Naive thymus-derived CD4-positive, alpha-beta T cell (primary cell): ENCODE measurements at regions of chr7 and their contacts with region 1.

Region 1: GRCh38 chr7:28020302-28020940 is 160.2 kb downstream of the JAZF1 start:
- DNase-seq: peak in 7 of 9 donors; percentile 27 to 63 (median 53)
- ATAC-seq: peak; percentile 90
- H3K4me3 ChIP-seq: no peak overlapping the region
- H3K4me3 Mint-ChIP-seq: peak overlapping the region in 1 of 10 donors; percentile 11
- H3K27ac ChIP-seq: no peak overlapping the region
- H3K27ac Mint-ChIP-seq: no peak overlapping the region
- H3K4me1 ChIP-seq: no peaks in the 10 kb centered on the region
- H3K4me1 Mint-ChIP-seq: peaks cover 0 to 17% (median 2%) of the 10 kb centered on the region in 7 donors
- H3K27me3 ChIP-seq: no peaks in the 10 kb centered on the region
- H3K27me3 Mint-ChIP-seq: peaks cover 0 to 3% (median 0%) of the 10 kb centered on the region in 5 donors

Region 2: GRCh38 chr7:27576360-27576944 is 444.0 kb before region 1 on chr7:
- CTCF ChIA-PET with region 1: no interaction called
- POLR2A ChIA-PET with region 1: no interaction called
- intact Hi-C with region 1: loop called in 1 of 2 experiments (anchors 2 kb)
- DNase-seq: peak in 5 of 9 donors; percentile 15 to 38 (median 29)
- ATAC-seq: peak; percentile 67
- H3K4me3 ChIP-seq: no peak overlapping the region
- H3K4me3 Mint-ChIP-seq: no peak overlapping the region
- H3K27ac ChIP-seq: no peak overlapping the region
- H3K27ac Mint-ChIP-seq: no peak overlapping the region
- H3K4me1 ChIP-seq: no peaks in the 10 kb centered on the region
- H3K4me1 Mint-ChIP-seq: peaks cover 0 to 6% (median 0%) of the 10 kb centered on the region in 7 donors
- H3K27me3 ChIP-seq: no peaks in the 10 kb centered on the region
- H3K27me3 Mint-ChIP-seq: peaks cover 0 to 3% (median 0%) of the 10 kb centered on the region in 5 donors

Region 3: DNA sequence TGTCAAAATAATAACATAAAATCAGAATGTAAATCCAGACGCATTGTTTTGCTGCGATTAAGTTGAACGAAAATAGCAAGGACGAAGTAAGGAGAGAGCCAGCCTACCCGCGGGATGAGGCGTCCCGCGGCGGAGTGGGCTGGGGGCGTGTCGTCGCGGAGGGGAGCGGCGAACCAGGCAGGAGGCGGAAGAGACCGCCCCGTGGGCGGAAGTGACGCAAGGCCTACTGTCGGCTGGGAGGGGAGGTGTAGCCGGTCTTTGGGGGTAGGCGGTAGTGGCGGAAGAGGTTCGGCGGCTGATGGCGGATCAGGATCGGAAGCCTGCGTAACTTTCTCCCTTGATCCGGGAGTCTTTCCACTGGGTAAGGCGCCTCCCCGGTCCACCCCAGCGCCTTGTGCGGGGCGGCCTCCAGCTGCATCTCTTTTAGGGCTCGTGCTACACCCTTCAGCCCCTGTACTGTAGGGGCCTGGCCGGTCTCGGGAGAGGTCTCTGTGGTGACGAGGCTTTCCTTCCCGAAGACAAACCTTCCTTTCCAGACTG is 280.4 kb before region 1 on chr7 and contains the start of gene TAX1BP1:
- CTCF ChIA-PET with region 1: no interaction called
- POLR2A ChIA-PET with region 1: no interaction called
- intact Hi-C with region 1: loop called (anchors 1 kb)
- DNase-seq: peak; percentile 92 to 97 (median 95)
- ATAC-seq: peak; percentile 97
- H3K4me3 ChIP-seq: peak within 1 kb of the TSS; percentile 91
- H3K4me3 Mint-ChIP-seq: peak within 1 kb of the TSS; percentile 81 to 99 (median 97)
- H3K27ac ChIP-seq: peak within 1 kb of the TSS; percentile 87
- H3K27ac Mint-ChIP-seq: peak within 1 kb of the TSS; percentile 76 to 99 (median 93)
- H3K4me1 ChIP-seq: peaks cover 6 to 24% of the 10 kb centered on the region in 2 donors
- H3K4me1 Mint-ChIP-seq: peaks cover 27 to 51% (median 44%) of the 10 kb centered on the region in 7 donors
- H3K27me3 ChIP-seq: no peaks in the 10 kb centered on the region
- H3K27me3 Mint-ChIP-seq: peaks cover 0 to 9% (median 0%) of the 10 kb centered on the region in 5 donors
- total RNA-seq, gene TAX1BP1: 69.4 to 111 (median 108) TPM

Region 4: GRCh38 chr7:27784393-27785053 is 235.9 kb before region 1 on chr7:
- CTCF ChIA-PET with region 1: interaction called, 3 read pairs
- POLR2A ChIA-PET with region 1: no interaction called
- intact Hi-C with region 1: loop called (anchors 1 to 5 kb)
- DNase-seq: peak in 7 of 9 donors; percentile 30 to 54 (median 43)
- ATAC-seq: peak; percentile 73
- H3K4me3 ChIP-seq: no peak overlapping the region
- H3K4me3 Mint-ChIP-seq: no peak overlapping the region
- H3K27ac ChIP-seq: no peak overlapping the region
- H3K27ac Mint-ChIP-seq: peak overlapping the region in 1 of 9 donors; percentile 15
- H3K4me1 ChIP-seq: no peaks in the 10 kb centered on the region
- H3K4me1 Mint-ChIP-seq: peaks cover 4 to 35% (median 20%) of the 10 kb centered on the region in 7 donors
- H3K27me3 ChIP-seq: no peaks in the 10 kb centered on the region
- H3K27me3 Mint-ChIP-seq: no peaks in the 10 kb centered on the region

Region 5: DNA sequence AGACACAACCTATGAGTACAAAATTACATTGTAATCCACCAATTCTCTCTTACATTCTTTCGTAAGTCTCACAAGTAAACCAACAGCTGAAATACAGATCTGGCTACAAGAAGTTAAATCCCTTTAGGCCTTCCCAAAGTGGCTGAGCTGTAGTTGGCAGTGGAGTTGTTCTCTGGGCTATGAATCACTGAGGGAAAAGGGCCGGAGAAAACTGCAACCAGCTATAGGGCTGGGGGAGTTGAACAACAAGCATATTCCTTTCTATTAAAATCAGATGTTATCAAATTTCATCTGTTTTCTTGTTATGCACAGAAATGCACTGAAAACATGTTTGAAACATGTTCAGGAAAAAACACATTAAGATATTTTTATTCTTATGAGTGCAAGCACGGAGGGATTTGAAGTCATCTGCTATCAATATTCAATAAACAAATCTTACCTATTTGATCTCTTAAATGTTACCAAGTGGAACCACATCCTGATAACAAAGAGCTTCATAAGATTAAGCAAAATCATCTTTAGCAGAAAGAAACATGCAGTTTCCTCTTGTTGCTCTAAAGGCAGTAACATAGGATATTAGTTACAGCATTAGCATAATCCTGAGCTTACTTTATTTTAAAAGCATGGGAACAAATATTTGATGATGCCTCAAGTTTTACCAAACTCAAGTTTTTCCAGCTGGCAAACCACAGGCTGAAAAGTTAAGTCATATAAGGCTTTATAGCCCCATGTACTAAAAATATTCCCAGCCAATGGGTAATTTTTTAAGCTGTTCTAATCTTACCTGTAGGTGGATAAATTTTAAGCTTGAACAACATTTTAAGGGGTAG is 67.8 kb before region 1 on chr7:
- CTCF ChIA-PET with region 1: interaction called, 10 read pairs
- POLR2A ChIA-PET with region 1: no interaction called
- intact Hi-C with region 1: loop called (anchors 5 to 10 kb)
- DNase-seq: peak in 6 of 9 donors; percentile 10 to 65 (median 44)
- ATAC-seq: peak; percentile 74
- H3K4me3 ChIP-seq: no peak overlapping the region
- H3K4me3 Mint-ChIP-seq: peak overlapping the region in 9 of 10 donors; percentile 55 to 85 (median 70)
- H3K27ac ChIP-seq: peak overlapping the region; percentile 39
- H3K27ac Mint-ChIP-seq: peak overlapping the region in 8 of 9 donors; percentile 34 to 95 (median 88)
- H3K4me1 ChIP-seq: peaks cover 0 to 32% of the 10 kb centered on the region in 2 donors
- H3K4me1 Mint-ChIP-seq: peaks cover 10 to 64% (median 49%) of the 10 kb centered on the region in 7 donors
- H3K27me3 ChIP-seq: no peaks in the 10 kb centered on the region
- H3K27me3 Mint-ChIP-seq: peaks cover 0 to 4% (median 0%) of the 10 kb centered on the region in 5 donors